ENCODE measurements at regions of chr6 and their contacts with region 1.

Region 1: DNA sequence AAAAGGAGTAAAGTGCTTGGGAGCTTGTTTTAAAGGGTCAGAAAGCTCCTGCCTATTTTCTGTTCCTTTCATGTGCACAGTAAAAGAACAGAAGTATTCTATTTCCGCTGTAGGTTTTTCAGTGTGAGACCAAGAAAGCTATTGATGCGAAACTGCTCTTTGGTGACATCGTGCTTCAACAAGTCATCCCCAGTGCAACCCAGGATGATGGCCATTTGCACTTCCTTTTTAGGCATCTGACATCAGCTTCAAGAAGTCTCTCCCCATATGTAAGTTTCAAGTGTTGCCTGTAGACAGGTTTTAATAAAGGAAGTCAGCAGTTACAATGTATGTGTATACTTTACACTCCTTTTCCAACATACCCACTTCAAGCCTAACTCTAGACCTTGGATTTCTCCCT is 131.6 kb downstream of the RFX6 start:
- DNase-seq: peak; percentile 71
- H3K4me3 ChIP-seq: peak overlapping the region; percentile 14
- H3K27ac ChIP-seq: peak overlapping the region; percentile 55
- H3K4me1 ChIP-seq: peaks cover 18% of the 10 kb centered on the region
- CTCF ChIP-seq: no peak

Region 2: GRCh38 chr6:116680975-116681808 is 327.4 kb before region 1 on chr6 and contains the start of gene KPNA5:
- CTCF ChIA-PET with region 1: no interaction called
- POLR2A ChIA-PET with region 1: no interaction called
- intact Hi-C with region 1: loop called (anchors 5 kb)
- DNase-seq: peak; percentile 92
- H3K4me3 ChIP-seq: peak within 1 kb of the TSS; percentile 82
- H3K27ac ChIP-seq: peak within 1 kb of the TSS; percentile 66
- H3K4me1 ChIP-seq: peaks cover 19% of the 10 kb centered on the region
- CTCF ChIP-seq: no peak
- total RNA-seq, gene KPNA5: 10.3 and 12.4 TPM in 2 replicates

Region 3: GRCh38 chr6:116764961-116765851 is 243.4 kb before region 1 on chr6 and contains the start of gene FAM162B:
- CTCF ChIA-PET with region 1: no interaction called
- POLR2A ChIA-PET with region 1: no interaction called
- intact Hi-C with region 1: no loop called
- DNase-seq: no peak
- H3K4me3 ChIP-seq: no peak within 1 kb of the TSS
- H3K27ac ChIP-seq: no peak within 1 kb of the TSS
- H3K4me1 ChIP-seq: no peaks in the 10 kb centered on the region
- CTCF ChIP-seq: no peak
- total RNA-seq, gene FAM162B: not detected in 2 replicates

Region 4: GRCh38 chr6:116990679-116991078 is 17.9 kb before region 1 on chr6:
- CTCF ChIA-PET with region 1: no interaction called
- POLR2A ChIA-PET with region 1: interaction called, 4 read pairs
- intact Hi-C with region 1: loop called (anchors 2 kb)
- DNase-seq: no peak
- H3K4me3 ChIP-seq: no peak overlapping the region
- H3K27ac ChIP-seq: no peak overlapping the region
- H3K4me1 ChIP-seq: no peaks in the 10 kb centered on the region
- CTCF ChIP-seq: no peak

Region 5: GRCh38 chr6:116996842-116997241 is 11.8 kb before region 1 on chr6:
- CTCF ChIA-PET with region 1: no interaction called
- POLR2A ChIA-PET with region 1: interaction called, 11 read pairs
- intact Hi-C with region 1: no loop called
- DNase-seq: peak; percentile 9
- H3K4me3 ChIP-seq: no peak overlapping the region
- H3K27ac ChIP-seq: no peak overlapping the region
- H3K4me1 ChIP-seq: peaks cover 4% of the 10 kb centered on the region
- CTCF ChIP-seq: no peak

Measured in OCI-LY7 (cell line).